CD8-positive, alpha-beta T cell (primary cell): ENCODE measurements at regions of chr1 and their contacts with region 1.

Region 1: DNA sequence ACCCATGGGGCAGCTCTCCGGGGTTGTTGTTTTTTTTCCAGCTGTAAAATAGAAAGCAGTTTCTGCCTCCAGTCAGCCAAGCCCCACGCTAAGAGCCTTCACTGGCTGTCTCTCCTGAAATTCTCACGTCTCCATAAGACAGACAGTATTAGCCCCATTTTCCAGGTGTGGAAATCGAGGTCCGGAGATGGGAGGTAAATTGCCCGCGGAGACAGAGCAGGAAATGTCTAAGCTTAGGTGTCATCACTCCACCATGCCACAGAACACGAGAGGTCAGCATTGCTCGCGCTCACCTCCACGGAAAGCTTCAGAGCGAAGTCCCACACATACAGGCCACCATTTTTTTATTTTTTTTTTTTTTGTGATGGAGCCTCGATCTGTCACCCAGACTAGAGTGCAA is 44.6 kb downstream of the TNFRSF8 start:
- DNase-seq: no peak
- ATAC-seq: no peak
- H3K4me3 ChIP-seq: no peak overlapping the region
- H3K4me3 Mint-ChIP-seq: no peak overlapping the region
- H3K27ac ChIP-seq: no peak overlapping the region
- H3K27ac Mint-ChIP-seq: no peak overlapping the region
- H3K4me1 ChIP-seq: no peaks in the 10 kb centered on the region
- H3K4me1 Mint-ChIP-seq: peaks cover 3% of the 10 kb centered on the region
- H3K27me3 ChIP-seq: no peaks in the 10 kb centered on the region
- H3K27me3 Mint-ChIP-seq: no peaks in the 10 kb centered on the region
- CTCF ChIP-seq: no peak

Region 2: GRCh38 chr1:12087797-12088314 is 19.9 kb before region 1 on chr1:
- CTCF ChIA-PET with region 1: interaction called, 4 read pairs
- POLR2A ChIA-PET with region 1: no interaction called
- intact Hi-C with region 1: loop called in 1 of 2 experiments (anchors 2 kb)
- DNase-seq: peak in 7 of 9 experiments; percentile 10 to 83 (median 47)
- ATAC-seq: peak; percentile 64
- H3K4me3 ChIP-seq: no peak overlapping the region
- H3K4me3 Mint-ChIP-seq: peak overlapping the region; percentile 66
- H3K27ac ChIP-seq: peak overlapping the region; percentile 6 to 71
- H3K27ac Mint-ChIP-seq: peak overlapping the region; percentile 79
- H3K4me1 ChIP-seq: peaks cover 33% of the 10 kb centered on the region
- H3K4me1 Mint-ChIP-seq: peaks cover 44% of the 10 kb centered on the region
- H3K27me3 ChIP-seq: no peaks in the 10 kb centered on the region
- H3K27me3 Mint-ChIP-seq: no peaks in the 10 kb centered on the region
- CTCF ChIP-seq: no peak